ENCODE measurements at regions of chr9 and their contacts with region 1.

Region 1: DNA sequence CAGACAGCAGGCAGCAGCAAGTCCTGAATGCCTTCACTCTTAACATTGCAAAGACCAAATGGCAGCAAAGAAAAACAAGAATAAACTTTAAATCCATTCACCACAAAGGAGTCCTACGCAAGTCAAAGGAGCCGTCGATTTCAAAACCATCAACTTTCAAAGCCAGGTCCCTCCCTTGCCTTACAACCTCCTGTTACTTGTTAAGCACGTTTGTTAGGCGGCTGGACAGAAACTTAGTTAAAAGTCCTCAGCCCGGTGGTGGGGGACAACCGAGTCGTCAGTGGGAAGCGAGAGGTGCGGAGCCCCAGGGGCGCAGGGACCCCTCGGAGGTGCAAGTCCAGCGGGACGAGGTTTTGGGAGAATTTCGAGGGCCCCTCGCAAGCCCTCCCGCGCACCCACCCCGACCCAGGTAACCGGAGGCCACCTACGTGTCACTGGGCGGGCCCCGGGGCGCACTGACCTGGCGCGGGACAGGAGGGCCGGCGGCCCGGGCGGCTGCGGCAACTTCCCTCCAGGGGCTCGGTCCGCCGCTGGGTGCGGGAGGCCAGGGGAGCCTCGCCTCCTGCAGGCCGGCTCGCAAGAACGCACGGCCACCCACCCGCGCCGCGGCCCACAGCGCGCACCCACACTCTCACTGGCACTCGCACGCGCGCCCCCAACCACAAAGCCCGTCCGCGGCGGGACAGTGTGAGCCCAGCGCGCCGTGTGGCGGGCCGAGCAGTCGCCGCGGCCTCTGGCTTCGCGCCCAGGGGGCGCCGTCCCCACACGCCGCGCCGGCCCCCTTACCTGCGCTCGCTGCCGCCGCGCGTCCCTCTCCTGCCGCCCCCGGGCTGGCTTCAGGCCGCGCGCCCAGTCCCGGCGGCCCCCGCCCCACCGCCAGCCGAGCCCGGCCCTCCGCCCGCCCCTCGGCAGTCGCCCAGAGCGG is 627 bp downstream of the LPAR1 start:
- DNase-seq: no peak
- H3K4me3 ChIP-seq: peak overlapping the region; percentile 95
- H3K27me3 ChIP-seq: no peaks in the 10 kb centered on the region
- CTCF ChIP-seq: no peak

Region 2: DNA sequence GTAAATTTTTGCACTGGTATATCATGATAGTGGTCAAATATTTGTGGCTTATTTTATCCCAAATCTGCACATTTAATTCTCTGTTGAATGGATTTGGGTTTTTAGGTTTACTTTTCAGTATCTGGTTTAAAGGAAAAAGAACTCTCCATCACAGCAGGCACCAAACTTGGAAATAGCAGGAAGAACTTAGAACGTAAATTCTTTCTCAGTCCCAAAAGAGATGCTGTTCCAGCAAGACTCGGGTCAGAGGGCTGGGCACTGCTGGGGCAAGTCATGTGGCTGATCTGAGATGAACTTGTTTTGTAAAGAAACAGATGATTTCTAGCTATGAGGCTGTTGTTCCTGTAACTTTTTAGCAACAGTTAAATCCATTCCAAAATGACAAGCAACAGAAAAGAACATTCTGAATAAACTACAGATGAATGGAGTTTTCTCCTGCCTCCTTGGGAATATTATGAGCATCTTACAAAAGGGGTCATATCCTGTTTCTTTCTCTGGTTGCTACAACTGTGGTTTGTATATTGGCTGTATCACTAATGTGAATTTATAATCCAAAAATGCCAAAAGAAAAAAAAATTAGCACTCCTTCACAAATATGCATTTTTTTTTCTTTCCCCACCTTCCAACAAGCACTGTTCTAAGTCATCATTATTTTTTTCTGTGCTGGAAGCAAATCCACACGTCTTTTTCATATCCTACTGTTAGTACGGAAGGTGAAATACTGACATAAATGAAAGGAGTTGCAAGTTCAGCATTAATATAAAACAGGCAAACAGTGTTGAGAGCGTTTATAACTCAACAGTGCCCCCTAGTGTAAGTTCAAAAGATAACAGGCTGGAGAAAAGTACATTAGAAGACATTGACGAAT is 261.3 kb after region 1 on chr9:
- CTCF ChIA-PET with region 1: interaction called, 12 read pairs
- POLR2A ChIA-PET with region 1: no interaction called
- DNase-seq: peak; percentile 35
- H3K4me3 ChIP-seq: no peak overlapping the region
- H3K27me3 ChIP-seq: no peaks in the 10 kb centered on the region
- CTCF ChIP-seq: peak; percentile 50